A549 (cell line): ENCODE measurements at regions of chr3 and their contacts with region 1.

Region 1: GRCh38 chr3:129224984-129225393 is 24.4 kb upstream of the COPG1 start:
- DNase-seq: peak; percentile 80 to 86
- ATAC-seq: peak; percentile 85 to 91
- H3K4me3 ChIP-seq: 0 out of 3 replicates have a peak overlapping the region, but pooled peaks have one; percentile 12
- H3K27ac ChIP-seq: peak overlapping the region; percentile 85 to 88
- H3K4me1 ChIP-seq: peaks cover 51% of the 10 kb centered on the region
- CTCF ChIP-seq: no peak
- EP300 ChIP-seq: no peak
- POLR2A ChIP-seq: peak; percentile 43
- RAD21 ChIP-seq: peak; percentile 7 to 23; a peak in 2 of 5 replicates

Region 2: GRCh38 chr3:129183569-129184395 is 41.2 kb before region 1 on chr3 and contains the start of gene CNBP:
- CTCF ChIA-PET with region 1: interaction called, 5 read pairs
- POLR2A ChIA-PET with region 1: interaction called, 16 read pairs
- DNase-seq: peak; percentile 86 to 94
- ATAC-seq: peak; percentile 99
- H3K4me3 ChIP-seq: peak within 1 kb of the TSS; percentile 98
- H3K27ac ChIP-seq: peak within 1 kb of the TSS; percentile 99 to 100
- H3K4me1 ChIP-seq: peaks cover 47% of the 10 kb centered on the region
- CTCF ChIP-seq: no peak
- EP300 ChIP-seq: no peak
- POLR2A ChIP-seq: peak; percentile 61
- RAD21 ChIP-seq: no peak
- polyA plus RNA-seq, gene CNBP: 309 and 365 TPM in 2 replicates

Region 3: GRCh38 chr3:129211772-129212171 is 13.2 kb before region 1 on chr3:
- CTCF ChIA-PET with region 1: interaction called, 8 read pairs
- POLR2A ChIA-PET with region 1: interaction called, 11 read pairs
- DNase-seq: peak; percentile 82 to 96
- ATAC-seq: peak; percentile 99 to 100
- H3K4me3 ChIP-seq: no peak overlapping the region
- H3K27ac ChIP-seq: peak overlapping the region; percentile 86 to 89
- H3K4me1 ChIP-seq: peaks cover 20% of the 10 kb centered on the region
- CTCF ChIP-seq: no peak
- EP300 ChIP-seq: no peak
- POLR2A ChIP-seq: no peak
- RAD21 ChIP-seq: peak in 1 of 2 experiments; percentile 40; a peak in 2 of 5 replicates